GM10248 (cell line): ENCODE measurements at regions of chr19 and their contacts with region 1.

Region 1: GRCh38 chr19:4583961-4584669 is 24.6 kb upstream of the SEMA6B start:
- DNase-seq: no peak
- CTCF ChIP-seq: no peak

Region 2: DNA sequence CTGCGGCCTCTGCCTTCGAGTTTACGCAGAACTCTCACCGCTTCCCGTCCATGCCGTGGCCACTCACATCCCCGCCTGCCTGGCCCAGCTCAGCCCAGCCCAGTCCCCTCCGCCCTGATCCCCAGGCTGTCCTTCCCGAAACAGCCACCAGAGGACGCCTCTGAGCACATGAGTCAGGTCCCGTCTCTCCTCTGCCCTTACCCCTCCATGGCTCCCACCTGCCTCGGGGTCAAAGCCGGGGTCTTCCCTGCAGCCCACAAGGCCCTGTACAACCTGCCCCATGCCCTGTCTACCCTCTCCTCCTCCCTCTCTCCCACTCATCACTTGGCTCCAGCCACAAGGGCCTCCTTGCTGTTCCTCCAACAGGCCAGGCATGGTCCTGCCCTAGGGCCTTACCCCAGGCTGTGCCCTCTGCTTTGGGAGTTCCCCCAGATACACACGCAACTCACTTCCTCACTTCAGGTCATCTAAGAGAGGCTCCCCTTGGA is 16.5 kb before region 1 on chr19:
- CTCF ChIA-PET with region 1: interaction called, 12 read pairs
- POLR2A ChIA-PET with region 1: no interaction called
- DNase-seq: no peak
- CTCF ChIP-seq: peak; percentile 62

Region 3: GRCh38 chr19:4713384-4713951 is 129.4 kb after region 1 on chr19:
- CTCF ChIA-PET with region 1: no interaction called
- POLR2A ChIA-PET with region 1: no interaction called
- DNase-seq: no peak
- CTCF ChIP-seq: no peak

Region 4: GRCh38 chr19:5193192-5193591 is 609.1 kb after region 1 on chr19:
- CTCF ChIA-PET with region 1: no interaction called
- POLR2A ChIA-PET with region 1: no interaction called
- DNase-seq: no peak
- CTCF ChIP-seq: no peak